Dorsolateral prefrontal cortex (tissue), 120 donors: ENCODE measurements at regions of chr9 and their contacts with region 1.

Region 1: DNA sequence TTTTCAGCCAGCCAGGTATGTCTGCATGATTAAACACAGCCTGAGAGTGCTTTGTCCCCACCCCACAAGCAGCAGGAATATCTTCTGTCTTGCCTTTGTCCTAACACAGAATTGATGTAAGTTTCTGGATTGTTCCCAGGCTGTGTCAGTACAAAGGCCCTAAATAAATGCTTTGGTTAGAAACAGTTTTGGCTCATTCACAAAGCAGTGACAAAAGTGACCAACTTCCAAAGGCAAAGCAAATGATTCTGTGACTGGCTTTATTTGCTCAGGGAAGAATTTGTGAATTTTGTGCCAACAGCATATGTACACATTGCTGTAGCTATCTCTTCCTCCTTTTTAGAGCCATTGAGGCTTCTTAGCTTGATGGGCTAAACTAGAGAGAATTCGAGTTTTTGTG is 133.7 kb downstream of the PLPPR1 start:
- DNase-seq: no peak
- H3K4me3 ChIP-seq: peak overlapping the region in 1 of 59 donors; percentile 15
- H3K27ac ChIP-seq: peak overlapping the region; percentile 31 to 97 (median 90)
- H3K27me3 ChIP-seq: no peaks in the 10 kb centered on the region
- CTCF ChIP-seq: peak in 1 of 56 donors; percentile 19

Region 2: DNA sequence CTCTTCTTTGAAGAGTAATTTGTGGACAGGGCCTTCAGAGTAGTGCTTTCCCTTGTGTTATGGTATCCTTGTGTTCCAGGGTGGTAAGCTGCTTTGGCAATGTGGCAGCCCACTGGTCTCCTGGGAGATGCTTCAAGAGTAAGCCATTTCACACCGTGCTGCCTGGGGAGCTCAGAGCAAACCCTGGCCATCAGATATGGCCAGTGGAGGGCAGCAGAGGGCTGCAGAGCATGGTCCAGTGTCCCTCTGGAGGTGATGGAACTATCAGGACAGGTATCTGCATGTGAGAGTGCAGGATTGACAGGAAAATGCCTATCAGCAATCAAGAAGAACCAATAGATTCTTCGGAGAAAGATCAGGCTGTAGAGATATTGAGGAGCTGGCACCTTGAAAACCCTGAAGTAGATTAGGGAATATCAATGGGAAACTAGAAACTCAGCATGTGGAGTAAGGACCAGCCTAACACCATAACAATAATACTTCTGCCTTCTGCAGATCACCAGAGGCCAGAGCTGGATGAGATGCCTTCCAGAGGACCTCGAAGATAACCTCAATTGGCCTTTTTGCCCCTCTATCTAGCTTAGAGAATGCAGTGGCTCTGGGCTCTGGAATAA is 42.9 kb before region 1 on chr9:
- intact Hi-C with region 1: loop called in 1 of 2 experiments (anchors 5 kb)
- DNase-seq: peak; percentile 43 to 83 (median 70)
- H3K4me3 ChIP-seq: no peak overlapping the region
- H3K27ac ChIP-seq: peak overlapping the region in 35 of 59 donors; percentile 6 to 77 (median 33)
- H3K27me3 ChIP-seq: no peaks in the 10 kb centered on the region
- CTCF ChIP-seq: peak; percentile 59 to 96 (median 86)

Region 3: DNA sequence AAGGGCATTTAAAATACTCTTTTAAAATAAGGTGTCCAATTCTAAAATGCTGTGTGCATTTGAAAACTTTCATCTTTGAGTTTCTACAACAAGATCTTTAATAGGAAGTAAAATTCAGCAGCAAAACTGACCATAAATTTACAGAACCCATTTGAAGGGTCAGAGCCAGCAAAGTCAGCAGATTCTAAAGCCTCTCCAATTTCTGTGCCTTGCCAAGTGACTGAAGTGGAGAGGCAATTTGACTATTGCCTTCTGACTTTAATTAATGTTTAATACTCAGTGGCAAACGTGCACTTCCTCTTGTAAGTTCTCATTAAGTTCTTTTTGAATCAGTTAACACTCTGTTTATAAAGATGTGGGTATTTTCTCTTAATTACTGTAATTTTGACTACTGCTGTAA is 67.4 kb after region 1 on chr9:
- intact Hi-C with region 1: loop called (anchors 2 kb)
- DNase-seq: no peak
- H3K4me3 ChIP-seq: no peak overlapping the region
- H3K27ac ChIP-seq: peak overlapping the region in 53 of 59 donors; percentile 5 to 98 (median 82)
- H3K27me3 ChIP-seq: no peaks in the 10 kb centered on the region
- CTCF ChIP-seq: no peak